Right cardiac atrium (tissue), 5 donors: ENCODE measurements at regions of chr7 and their contacts with region 1.

Region 1: DNA sequence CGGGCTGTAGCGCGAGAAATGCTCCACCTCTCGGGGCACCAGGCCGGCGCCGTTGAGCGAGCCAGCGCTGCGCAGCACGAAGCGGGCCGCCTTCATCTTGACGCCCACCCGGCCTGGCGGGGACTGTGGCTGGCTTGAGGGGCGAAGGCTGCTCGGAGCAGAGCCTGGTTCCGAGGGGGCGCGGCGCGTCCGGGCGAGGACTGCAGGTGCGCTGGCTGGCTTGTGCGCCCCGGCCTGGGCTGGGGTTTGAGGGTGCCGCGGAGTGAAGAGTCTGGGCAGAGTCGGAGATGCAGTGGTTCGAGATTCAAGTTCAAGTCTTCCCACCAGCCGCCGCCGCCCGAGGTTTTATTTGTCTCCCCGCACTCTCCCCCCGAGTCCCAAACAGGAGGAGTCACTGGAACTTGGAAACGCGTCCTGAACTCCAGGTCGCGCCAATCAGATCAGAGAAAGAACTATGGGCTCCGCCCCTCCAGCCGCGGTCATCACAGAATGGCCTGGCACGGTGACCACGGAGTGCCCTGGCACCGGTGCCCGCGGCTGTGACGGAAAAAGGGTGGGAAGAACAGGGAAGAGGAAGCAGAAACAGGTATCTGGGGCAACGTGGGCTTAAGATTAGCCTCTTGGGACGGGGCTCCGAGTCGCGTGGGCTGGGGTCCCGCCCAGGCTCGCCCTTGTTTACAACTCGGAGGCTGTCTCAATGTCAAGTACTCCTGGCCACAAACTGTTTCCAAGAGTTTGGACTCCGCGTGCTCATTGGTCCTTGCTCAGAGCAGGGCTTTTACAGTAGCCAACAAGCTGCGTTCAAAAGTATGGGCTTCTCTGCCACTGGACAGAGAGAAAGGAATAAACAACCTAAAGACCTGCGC is at the start of gene PDK4:
- DNase-seq: peak; percentile 97 to 99 (median 97)
- ATAC-seq: peak; percentile 95 to 98
- H3K4me3 ChIP-seq: peak within 1 kb of the TSS; percentile 66
- H3K27ac ChIP-seq: peak within 1 kb of the TSS; percentile 87
- H3K4me1 ChIP-seq: no peaks in the 10 kb centered on the region
- H3K27me3 ChIP-seq: no peaks in the 10 kb centered on the region
- total RNA-seq, gene PDK4: 53.0 to 842 (median 103) TPM

Region 2: DNA sequence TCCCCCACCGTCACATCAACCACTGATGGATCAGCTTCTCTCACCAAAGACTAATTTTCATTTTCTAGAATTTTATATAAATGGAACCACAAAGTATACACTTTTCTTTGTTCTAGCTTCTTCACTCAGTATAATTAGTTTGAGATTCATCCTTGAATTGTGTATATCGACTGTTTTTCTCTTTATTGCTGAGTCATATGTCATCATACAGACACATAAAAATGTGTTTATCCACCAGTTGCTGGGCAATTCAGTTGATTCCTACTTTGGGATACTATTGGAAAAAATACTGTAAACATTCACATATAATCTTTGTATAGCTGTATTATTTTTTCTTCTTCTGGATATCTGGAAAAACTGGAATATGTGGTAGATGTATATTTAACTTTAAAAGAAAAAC is 26.7 kb before region 1 on chr7:
- intact Hi-C with region 1: no loop called
- DNase-seq: no peak
- ATAC-seq: no peak
- H3K4me3 ChIP-seq: no peak overlapping the region
- H3K27ac ChIP-seq: no peak overlapping the region
- H3K4me1 ChIP-seq: no peaks in the 10 kb centered on the region
- H3K27me3 ChIP-seq: no peaks in the 10 kb centered on the region

Region 3: DNA sequence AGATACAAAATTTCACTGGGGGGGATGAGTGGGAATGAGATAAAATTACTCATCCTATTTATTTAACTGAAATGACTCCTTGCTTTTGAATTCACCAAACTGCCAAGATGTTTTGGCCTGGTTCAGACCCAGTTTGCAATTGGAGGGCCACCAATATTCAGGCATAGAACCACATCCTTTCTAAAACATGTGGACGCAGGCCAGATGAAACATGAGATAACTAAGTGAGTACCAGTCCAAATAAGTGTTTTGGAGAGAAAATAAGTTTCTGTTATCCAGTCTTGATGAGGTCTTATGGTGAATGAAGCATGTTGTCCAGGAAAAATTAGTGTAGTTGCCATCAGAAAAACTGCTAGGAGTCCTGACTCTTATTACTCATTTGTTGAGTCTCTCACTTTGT is 36.2 kb after region 1 on chr7:
- intact Hi-C with region 1: loop called in 1 of 4 experiments (anchors 5 kb)
- DNase-seq: peak in 1 of 3 donors; percentile 30
- ATAC-seq: peak; percentile 17 to 68
- H3K4me3 ChIP-seq: no peak overlapping the region
- H3K27ac ChIP-seq: no peak overlapping the region
- H3K4me1 ChIP-seq: peaks cover 12% of the 10 kb centered on the region
- H3K27me3 ChIP-seq: no peaks in the 10 kb centered on the region

Region 4: DNA sequence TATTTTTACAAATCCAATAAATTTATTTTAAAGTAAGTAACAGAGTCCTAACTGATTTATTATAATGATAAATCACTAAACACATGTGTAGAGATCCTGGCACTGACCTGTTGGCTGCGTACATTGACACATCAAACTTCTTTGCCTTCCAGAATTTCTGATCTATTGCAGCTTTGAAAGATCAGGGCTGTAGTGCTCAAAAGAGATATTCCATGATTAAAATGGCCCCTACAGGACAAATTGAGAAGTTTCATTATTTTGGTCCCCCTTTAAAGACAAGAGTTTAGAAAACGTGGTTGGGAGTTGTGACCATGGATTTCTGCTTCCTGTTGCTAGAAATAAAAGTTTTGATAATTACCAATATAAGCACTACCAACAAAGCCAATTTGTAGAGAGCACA is 87.6 kb after region 1 on chr7:
- intact Hi-C with region 1: loop called in 3 of 4 experiments (anchors 5 to 10 kb)
- DNase-seq: no peak
- ATAC-seq: peak; percentile 46 to 74
- H3K4me3 ChIP-seq: no peak overlapping the region
- H3K27ac ChIP-seq: no peak overlapping the region
- H3K4me1 ChIP-seq: no peaks in the 10 kb centered on the region
- H3K27me3 ChIP-seq: no peaks in the 10 kb centered on the region